CD8-positive, alpha-beta memory T cell (primary cell): ENCODE measurements at regions of chr1 and their contacts with region 1.

Region 1: GRCh38 chr1:11037740-11038182 is 9.3 kb downstream of the MASP2 start:
- DNase-seq: peak; percentile 77 to 90 (median 83)
- H3K4me3 ChIP-seq: no peak overlapping the region
- H3K4me3 Mint-ChIP-seq: no peak overlapping the region
- H3K27ac ChIP-seq: no peak overlapping the region
- H3K27ac Mint-ChIP-seq: no peak overlapping the region
- H3K4me1 ChIP-seq: peaks cover 7% of the 10 kb centered on the region
- H3K4me1 Mint-ChIP-seq: peaks cover 6 to 8% (median 7%) of the 10 kb centered on the region in 3 donors
- H3K27me3 ChIP-seq: peaks cover 4% of the 10 kb centered on the region
- H3K27me3 Mint-ChIP-seq: peaks cover 4 to 9% of the 10 kb centered on the region in 2 donors

Region 2: GRCh38 chr1:11051781-11052511 is 14.2 kb after region 1 on chr1:
- CTCF ChIA-PET with region 1: interaction called, 18 read pairs
- POLR2A ChIA-PET with region 1: no interaction called
- DNase-seq: no peak
- H3K4me3 ChIP-seq: no peak overlapping the region
- H3K4me3 Mint-ChIP-seq: peak overlapping the region in 1 of 7 donors; percentile 23
- H3K27ac ChIP-seq: no peak overlapping the region
- H3K27ac Mint-ChIP-seq: peak overlapping the region in 1 of 8 donors; percentile 11
- H3K4me1 ChIP-seq: no peaks in the 10 kb centered on the region
- H3K4me1 Mint-ChIP-seq: peaks cover 0 to 9% (median 3%) of the 10 kb centered on the region in 3 donors
- H3K27me3 ChIP-seq: no peaks in the 10 kb centered on the region
- H3K27me3 Mint-ChIP-seq: no peaks in the 10 kb centered on the region

Region 3: GRCh38 chr1:11059990-11060830 is 22.4 kb after region 1 on chr1 and contains the start of gene SRM:
- CTCF ChIA-PET with region 1: interaction called, 27 read pairs
- POLR2A ChIA-PET with region 1: interaction called, 9 read pairs
- DNase-seq: peak; percentile 86 to 92 (median 90)
- H3K4me3 ChIP-seq: peak within 1 kb of the TSS; percentile 63
- H3K4me3 Mint-ChIP-seq: peak within 1 kb of the TSS; percentile 89 to 97 (median 93)
- H3K27ac ChIP-seq: peak within 1 kb of the TSS; percentile 79
- H3K27ac Mint-ChIP-seq: peak within 1 kb of the TSS; percentile 91 to 99 (median 97)
- H3K4me1 ChIP-seq: peaks cover 25% of the 10 kb centered on the region
- H3K4me1 Mint-ChIP-seq: peaks cover 30 to 40% (median 35%) of the 10 kb centered on the region in 3 donors
- H3K27me3 ChIP-seq: no peaks in the 10 kb centered on the region
- H3K27me3 Mint-ChIP-seq: no peaks in the 10 kb centered on the region
- total RNA-seq, gene SRM: 423 to 438 TPM

Region 4: GRCh38 chr1:11071463-11072215 is 33.9 kb after region 1 on chr1:
- CTCF ChIA-PET with region 1: interaction called, 11 read pairs
- POLR2A ChIA-PET with region 1: no interaction called
- DNase-seq: no peak
- H3K4me3 ChIP-seq: no peak overlapping the region
- H3K4me3 Mint-ChIP-seq: no peak overlapping the region
- H3K27ac ChIP-seq: no peak overlapping the region
- H3K27ac Mint-ChIP-seq: peak overlapping the region in 3 of 8 donors; percentile 39 to 80 (median 79)
- H3K4me1 ChIP-seq: no peaks in the 10 kb centered on the region
- H3K4me1 Mint-ChIP-seq: peaks cover 0 to 2% (median 0%) of the 10 kb centered on the region in 3 donors
- H3K27me3 ChIP-seq: no peaks in the 10 kb centered on the region
- H3K27me3 Mint-ChIP-seq: no peaks in the 10 kb centered on the region

Region 5: DNA sequence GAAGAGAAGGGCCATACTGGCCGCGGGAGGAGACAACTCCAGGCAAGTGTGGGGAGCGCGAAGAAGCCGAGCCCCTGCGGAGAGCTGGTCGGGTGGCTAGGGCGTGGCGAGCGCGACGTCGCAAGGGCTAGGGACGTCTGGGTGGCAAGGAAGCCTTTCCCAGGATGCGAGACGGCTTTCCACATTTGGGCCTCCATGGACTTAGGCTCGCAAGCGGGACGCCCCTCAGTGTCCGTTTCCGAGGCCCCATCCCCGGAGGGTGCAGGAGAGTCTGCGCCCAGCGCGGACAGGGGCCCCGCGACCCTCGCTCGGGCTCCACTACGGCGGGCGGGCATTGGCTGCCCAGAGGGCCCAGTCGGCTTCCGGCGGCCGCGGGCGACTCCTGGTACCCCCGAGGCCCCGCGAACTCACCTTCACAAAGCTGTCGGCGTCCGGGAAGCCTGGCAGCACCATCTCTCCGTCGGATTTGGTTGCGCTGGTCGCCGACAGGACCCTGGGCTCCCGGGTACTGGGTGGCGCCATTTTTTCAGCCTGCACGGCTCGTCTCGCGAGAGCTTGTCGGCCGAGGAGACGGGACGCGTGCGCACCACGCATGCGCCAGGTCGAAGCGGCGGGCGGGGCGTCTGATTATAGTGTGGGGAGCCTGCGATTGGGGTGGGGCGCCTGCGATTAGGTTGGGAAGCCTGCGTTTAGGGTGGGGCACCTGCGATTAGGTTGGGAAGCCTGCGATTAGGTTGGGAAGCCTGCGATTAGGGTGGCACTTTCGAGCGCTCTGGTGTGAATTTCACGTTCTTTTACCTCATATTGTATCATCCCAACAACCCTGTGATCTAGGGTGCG is 61.8 kb after region 1 on chr1 and contains the start of gene EXOSC10:
- CTCF ChIA-PET with region 1: interaction called, 32 read pairs
- POLR2A ChIA-PET with region 1: no interaction called
- DNase-seq: peak; percentile 92 to 96 (median 95)
- H3K4me3 ChIP-seq: peak within 1 kb of the TSS; percentile 83
- H3K4me3 Mint-ChIP-seq: peak within 1 kb of the TSS; percentile 90 to 98 (median 93)
- H3K27ac ChIP-seq: peak within 1 kb of the TSS; percentile 94
- H3K27ac Mint-ChIP-seq: peak within 1 kb of the TSS; percentile 90 to 96 (median 96)
- H3K4me1 ChIP-seq: peaks cover 18% of the 10 kb centered on the region
- H3K4me1 Mint-ChIP-seq: peaks cover 19 to 26% (median 20%) of the 10 kb centered on the region in 3 donors
- H3K27me3 ChIP-seq: no peaks in the 10 kb centered on the region
- H3K27me3 Mint-ChIP-seq: no peaks in the 10 kb centered on the region
- total RNA-seq, gene EXOSC10: 92.9 to 94.0 TPM

Region 6: DNA sequence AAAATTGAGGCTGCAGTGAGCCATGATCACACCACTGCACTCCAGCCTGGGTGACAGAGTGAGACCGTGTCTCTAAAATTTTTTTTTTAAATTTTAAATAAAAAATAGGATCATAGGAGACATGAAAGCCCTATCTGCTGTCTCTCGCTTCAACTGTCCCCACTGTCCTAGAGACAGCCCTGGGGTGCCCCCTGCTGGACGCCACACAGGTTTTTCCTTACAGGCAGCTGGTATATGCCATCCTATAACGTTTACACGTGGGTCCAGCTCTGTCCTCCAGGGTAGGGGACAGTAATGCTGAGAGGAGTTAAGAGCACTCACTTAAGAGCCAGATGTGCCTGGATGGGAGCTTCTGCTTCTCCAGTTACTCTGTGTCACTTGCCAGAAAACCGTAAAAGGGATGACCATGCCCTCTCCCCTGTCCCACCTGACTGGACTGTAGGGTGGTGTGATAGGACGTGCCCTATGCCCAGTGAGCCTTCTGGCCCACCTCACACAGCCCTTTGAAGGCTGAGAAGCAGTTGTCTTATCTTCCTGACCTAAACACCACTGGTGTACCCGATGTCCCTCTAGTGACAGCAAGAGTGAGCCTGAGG is 608.0 kb after region 1 on chr1:
- CTCF ChIA-PET with region 1: interaction called, 30 read pairs
- POLR2A ChIA-PET with region 1: interaction called, 3 read pairs
- DNase-seq: peak; percentile 63 to 84 (median 68)
- H3K4me3 ChIP-seq: no peak overlapping the region
- H3K4me3 Mint-ChIP-seq: no peak overlapping the region
- H3K27ac ChIP-seq: no peak overlapping the region
- H3K27ac Mint-ChIP-seq: peak overlapping the region in 1 of 8 donors; percentile 58
- H3K4me1 ChIP-seq: peaks cover 14% of the 10 kb centered on the region
- H3K4me1 Mint-ChIP-seq: peaks cover 11 to 20% (median 14%) of the 10 kb centered on the region in 3 donors
- H3K27me3 ChIP-seq: no peaks in the 10 kb centered on the region
- H3K27me3 Mint-ChIP-seq: peaks cover 0 to 2% of the 10 kb centered on the region in 2 donors